H1 (cell line): ENCODE measurements at regions of chr16 and their contacts with region 1.

Region 1: GRCh38 chr16:4957720-4958509 is at the start of gene SEC14L5:
- DNase-seq: peak; percentile 99 to 100
- H3K4me3 ChIP-seq: peak within 1 kb of the TSS; percentile 42 to 76 (median 61)
- H3K27ac ChIP-seq: no peak within 1 kb of the TSS
- H3K4me1 ChIP-seq: peaks cover 0 to 10% (median 9%) of the 10 kb centered on the region in 4 experiments; a peak in 6 of 7 replicates
- H3K27me3 ChIP-seq: no peaks in the 10 kb centered on the region; a peak in 2 of 7 replicates
- CTCF ChIP-seq: no peak
- EP300 ChIP-seq: no peak
- POLR2A ChIP-seq: no peak
- RAD21 ChIP-seq: peak in 1 of 2 experiments; percentile 16; a peak in 1 of 4 replicates
- total RNA-seq, gene SEC14L5: 3.0 and 3.2 TPM in 2 replicates

Region 2: GRCh38 chr16:4780235-4780634 is 177.7 kb before region 1 on chr16:
- CTCF ChIA-PET with region 1: no interaction called
- POLR2A ChIA-PET with region 1: no interaction called
- DNase-seq: no peak
- H3K4me3 ChIP-seq: no peak overlapping the region
- H3K27ac ChIP-seq: no peak overlapping the region
- H3K4me1 ChIP-seq: no peaks in the 10 kb centered on the region
- H3K27me3 ChIP-seq: no peaks in the 10 kb centered on the region
- CTCF ChIP-seq: no peak
- EP300 ChIP-seq: no peak
- POLR2A ChIP-seq: no peak
- RAD21 ChIP-seq: no peak

Region 3: GRCh38 chr16:4874666-4875065 is 83.2 kb before region 1 on chr16:
- CTCF ChIA-PET with region 1: interaction called, 15 read pairs
- POLR2A ChIA-PET with region 1: no interaction called
- DNase-seq: no peak
- H3K4me3 ChIP-seq: no peak overlapping the region
- H3K27ac ChIP-seq: no peak overlapping the region
- H3K4me1 ChIP-seq: no peaks in the 10 kb centered on the region
- H3K27me3 ChIP-seq: no peaks in the 10 kb centered on the region
- CTCF ChIP-seq: no peak
- EP300 ChIP-seq: no peak
- POLR2A ChIP-seq: no peak
- RAD21 ChIP-seq: no peak

Region 4: GRCh38 chr16:4892361-4893102 is 65.4 kb before region 1 on chr16:
- CTCF ChIA-PET with region 1: interaction called, 23 read pairs
- POLR2A ChIA-PET with region 1: interaction called, 9 read pairs
- DNase-seq: no peak
- H3K4me3 ChIP-seq: no peak overlapping the region
- H3K27ac ChIP-seq: no peak overlapping the region
- H3K4me1 ChIP-seq: no peaks in the 10 kb centered on the region
- H3K27me3 ChIP-seq: no peaks in the 10 kb centered on the region
- CTCF ChIP-seq: no peak
- EP300 ChIP-seq: no peak
- POLR2A ChIP-seq: no peak
- RAD21 ChIP-seq: no peak

Region 5: DNA sequence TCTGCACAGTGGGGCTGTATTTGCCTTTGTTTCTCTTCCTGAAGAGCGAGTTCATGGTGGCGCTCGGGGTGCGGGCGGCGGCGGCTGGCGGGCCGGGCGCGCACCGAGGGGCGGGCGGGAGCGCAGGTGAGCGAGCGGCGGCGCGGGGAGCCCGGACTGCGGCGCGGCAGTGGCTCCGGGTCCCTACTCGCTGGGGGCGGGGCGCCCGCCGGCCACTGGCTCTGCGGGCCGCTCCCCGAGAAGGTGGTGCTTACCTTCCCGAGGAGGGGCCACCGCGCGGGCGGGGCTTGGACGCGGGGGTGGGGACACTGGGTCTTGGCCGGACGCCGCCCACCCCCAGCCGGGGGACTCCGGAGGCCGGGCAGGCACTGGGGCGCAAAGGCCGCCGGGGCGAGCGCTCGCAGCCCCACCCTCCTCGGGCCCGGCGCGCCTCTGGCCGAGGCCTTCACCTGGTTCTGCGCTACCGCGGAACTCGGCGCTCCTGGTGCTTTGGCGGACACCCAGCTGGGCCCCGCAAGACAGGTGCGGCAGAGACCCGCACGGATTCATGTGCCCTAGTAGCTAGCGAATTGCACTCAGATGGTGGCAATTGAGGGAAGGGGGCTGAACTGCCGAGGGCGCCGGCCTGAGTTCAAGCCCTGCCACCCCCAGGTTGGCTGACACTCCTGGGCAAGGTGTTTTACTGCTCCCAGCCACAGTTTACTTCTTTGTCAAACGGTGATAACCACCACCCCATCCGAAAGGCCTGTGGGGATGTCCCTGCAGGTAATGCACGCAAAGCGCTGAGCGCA is 20.7 kb before region 1 on chr16 and contains the start of gene PPL:
- CTCF ChIA-PET with region 1: interaction called, 30 read pairs
- POLR2A ChIA-PET with region 1: interaction called, 18 read pairs
- DNase-seq: peak in 1 of 2 experiments; percentile 98
- H3K4me3 ChIP-seq: peak within 1 kb of the TSS; percentile 67 to 100 (median 96)
- H3K27ac ChIP-seq: peak within 1 kb of the TSS; percentile 13; the same call in 1 of the 2 replicates
- H3K4me1 ChIP-seq: peaks cover 0 to 20% (median 11%) of the 10 kb centered on the region in 4 experiments; a peak in 4 of 7 replicates
- H3K27me3 ChIP-seq: no peaks in the 10 kb centered on the region
- CTCF ChIP-seq: no peak
- EP300 ChIP-seq: peak in 1 of 2 experiments; percentile 2; a peak in 1 of 3 replicates
- POLR2A ChIP-seq: no peak
- RAD21 ChIP-seq: no peak
- total RNA-seq, gene PPL: 28.8 and 29.5 TPM in 2 replicates

Region 6: DNA sequence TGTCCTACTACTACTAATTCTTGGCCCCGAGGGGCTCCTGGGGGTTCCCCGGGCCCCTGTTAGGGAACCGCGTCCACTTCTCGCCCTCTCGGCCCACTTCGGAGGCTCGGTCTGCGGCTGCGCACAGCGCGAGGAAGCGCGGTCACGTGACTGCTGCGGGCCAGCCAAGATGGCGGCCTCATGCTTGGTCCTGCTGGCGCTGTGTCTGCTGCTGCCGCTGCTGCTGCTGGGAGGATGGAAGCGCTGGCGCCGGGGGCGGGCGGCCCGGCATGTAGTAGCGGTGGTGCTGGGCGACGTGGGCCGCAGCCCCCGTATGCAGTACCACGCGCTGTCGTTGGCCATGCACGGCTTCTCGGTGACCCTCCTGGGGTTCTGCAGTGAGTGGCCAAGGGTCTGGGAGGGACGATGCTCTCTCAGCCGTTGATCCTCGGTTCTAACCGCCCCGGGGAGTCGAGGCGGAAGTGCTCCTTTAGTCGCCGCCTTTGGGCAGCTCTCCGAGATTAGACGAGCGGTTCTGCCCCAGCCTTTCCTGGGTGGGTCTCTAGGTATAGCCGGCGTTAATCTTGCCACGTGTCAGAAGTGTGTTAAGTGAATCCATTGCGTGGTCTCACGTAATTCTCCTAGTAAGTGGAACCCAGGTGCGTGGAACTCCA is 113.9 kb after region 1 on chr16 and contains the start of gene ALG1:
- CTCF ChIA-PET with region 1: no interaction called
- POLR2A ChIA-PET with region 1: no interaction called
- DNase-seq: peak in 1 of 2 experiments; percentile 94
- H3K4me3 ChIP-seq: peak within 1 kb of the TSS; percentile 59 to 87 (median 77)
- H3K27ac ChIP-seq: peak within 1 kb of the TSS; percentile 50
- H3K4me1 ChIP-seq: peaks cover 0 to 6% (median 5%) of the 10 kb centered on the region in 4 experiments; a peak in 5 of 7 replicates
- H3K27me3 ChIP-seq: 0 out of 7 replicates have a peak, but pooled peaks cover 0 to 3% (median 0%) of the 10 kb centered on the region in 4 experiments
- CTCF ChIP-seq: 0 out of 4 replicates have a peak, but pooled peaks of 1 of the 3 experiments have one; percentile 0
- EP300 ChIP-seq: no peak
- POLR2A ChIP-seq: peak; percentile 95 to 96
- RAD21 ChIP-seq: no peak
- total RNA-seq, gene ALG1: 34.8 and 35.7 TPM in 2 replicates